Posterior vena cava (tissue), 2 donors: ENCODE measurements at regions of chr13 and their contacts with region 1.

Region 1: DNA sequence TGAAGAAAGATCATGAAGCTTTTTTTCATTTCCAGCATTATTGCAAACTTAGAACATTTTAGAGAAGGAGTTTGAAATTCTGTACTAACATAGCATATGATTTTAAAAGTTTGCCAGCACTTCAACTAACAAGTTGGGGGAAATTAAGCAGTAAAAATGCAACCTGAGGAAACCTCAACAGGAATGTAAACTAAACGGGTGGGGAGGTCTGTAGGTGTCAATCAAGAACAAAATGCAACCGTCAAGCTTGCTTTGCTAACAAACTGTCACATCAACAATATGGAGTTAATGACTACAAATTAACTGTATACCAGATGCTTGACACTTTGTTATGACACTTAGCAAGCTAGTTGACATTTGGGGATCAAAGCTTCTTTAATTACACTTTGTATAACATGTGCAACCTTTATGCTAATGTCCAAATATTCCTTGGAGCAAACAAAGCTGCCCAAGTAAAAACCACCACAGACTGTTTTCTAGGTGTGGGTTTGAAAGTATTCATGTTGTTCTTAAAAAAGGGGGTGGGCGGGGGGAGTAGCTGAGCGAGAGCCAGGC is 52.1 kb downstream of the DACH1 start:
- DNase-seq: no peak

Region 2: DNA sequence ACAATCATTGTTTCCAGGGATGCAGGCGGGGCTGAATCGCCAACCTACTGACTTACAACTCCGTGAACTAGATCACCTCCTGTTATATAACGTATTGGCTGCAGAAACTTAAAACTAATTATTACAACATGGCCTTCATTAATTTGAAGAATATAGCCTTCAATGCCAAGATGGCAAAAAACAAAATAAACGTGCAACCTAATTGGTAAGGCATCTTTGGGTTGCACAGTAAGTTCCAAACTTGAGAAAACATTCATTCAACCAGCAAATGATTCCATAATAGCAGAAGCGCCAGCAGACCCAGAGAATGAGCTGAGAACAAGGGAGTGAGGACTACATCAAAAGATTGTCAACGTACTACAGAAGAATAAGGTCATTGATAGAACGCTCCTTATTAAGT is 12.4 kb after region 1 on chr13:
- intact Hi-C with region 1: loop called in 1 of 2 experiments (anchors 1 kb)
- DNase-seq: no peak